ENCODE measurements at regions of chr12 and their contacts with region 1.

Region 1: GRCh38 chr12:108803428-108804105 is 53.8 kb downstream of the SSH1 start:
- DNase-seq: peak; percentile 88
- H3K4me3 Mint-ChIP-seq: no peak overlapping the region
- H3K27ac Mint-ChIP-seq: no peak overlapping the region
- H3K4me1 Mint-ChIP-seq: no peaks in the 10 kb centered on the region
- H3K27me3 Mint-ChIP-seq: no peaks in the 10 kb centered on the region
- CTCF ChIP-seq: peak; percentile 96

Region 2: GRCh38 chr12:108640802-108641445 is 162.6 kb before region 1 on chr12:
- CTCF ChIA-PET with region 1: interaction called, 17 read pairs
- POLR2A ChIA-PET with region 1: no interaction called
- intact Hi-C with region 1: no loop called
- DNase-seq: no peak
- H3K4me3 Mint-ChIP-seq: no peak overlapping the region
- H3K27ac Mint-ChIP-seq: no peak overlapping the region
- H3K4me1 Mint-ChIP-seq: peaks cover 23% of the 10 kb centered on the region
- H3K27me3 Mint-ChIP-seq: no peaks in the 10 kb centered on the region
- CTCF ChIP-seq: no peak

Region 3: GRCh38 chr12:108685469-108686260 is 117.9 kb before region 1 on chr12:
- CTCF ChIA-PET with region 1: interaction called, 19 read pairs
- POLR2A ChIA-PET with region 1: interaction called, 4 read pairs
- intact Hi-C with region 1: no loop called
- DNase-seq: no peak
- H3K4me3 Mint-ChIP-seq: no peak overlapping the region
- H3K27ac Mint-ChIP-seq: peak overlapping the region; percentile 70
- H3K4me1 Mint-ChIP-seq: peaks cover 48% of the 10 kb centered on the region
- H3K27me3 Mint-ChIP-seq: no peaks in the 10 kb centered on the region
- CTCF ChIP-seq: no peak

Region 4: DNA sequence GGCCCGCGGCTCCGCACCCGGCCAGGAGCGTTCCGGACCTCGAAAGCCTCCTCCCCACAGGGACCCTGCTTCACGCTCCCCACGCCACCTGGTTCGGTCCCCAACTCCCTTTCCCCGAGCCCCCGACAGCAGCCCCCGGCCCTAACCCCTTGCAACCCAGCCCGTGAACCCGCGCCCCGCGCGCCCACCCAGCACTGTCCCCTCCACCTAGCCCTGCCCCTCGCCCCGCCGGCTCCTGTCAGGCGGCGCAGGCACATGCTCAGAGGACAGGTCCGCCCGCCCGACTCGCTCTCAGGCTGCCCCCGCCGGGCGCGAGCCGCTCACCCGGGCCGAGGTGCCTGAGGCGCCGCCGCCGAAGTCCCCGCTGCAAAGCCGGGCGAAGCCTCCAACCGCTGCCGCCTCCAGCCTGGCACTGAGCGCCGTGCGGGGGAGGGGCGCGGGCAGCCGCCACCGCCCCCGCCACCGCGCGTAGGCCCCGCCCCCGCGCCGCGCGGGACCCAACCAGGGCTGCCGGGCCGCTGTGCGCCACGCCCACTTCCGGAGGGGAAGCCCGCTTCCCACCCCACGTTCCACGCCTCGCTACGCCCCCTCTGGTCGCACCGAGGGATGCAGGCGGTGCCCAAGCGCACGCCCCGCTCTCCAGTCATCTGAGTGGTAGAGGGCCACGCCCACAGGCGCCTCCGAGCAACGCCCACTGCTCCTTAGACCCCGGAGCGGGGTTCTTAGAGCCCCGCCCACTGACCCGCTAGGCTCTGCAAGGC is 72.3 kb before region 1 on chr12 and contains the start of gene CORO1C:
- CTCF ChIA-PET with region 1: interaction called, 8 read pairs
- POLR2A ChIA-PET with region 1: interaction called, 4 read pairs
- intact Hi-C with region 1: loop called (anchors 5 kb)
- DNase-seq: peak; percentile 96
- H3K4me3 Mint-ChIP-seq: peak within 1 kb of the TSS; percentile 90
- H3K27ac Mint-ChIP-seq: peak within 1 kb of the TSS; percentile 87
- H3K4me1 Mint-ChIP-seq: peaks cover 42% of the 10 kb centered on the region
- H3K27me3 Mint-ChIP-seq: no peaks in the 10 kb centered on the region
- CTCF ChIP-seq: peak; percentile 68
- total RNA-seq, gene CORO1C: 130 and 141 TPM in 2 replicates

Region 5: DNA sequence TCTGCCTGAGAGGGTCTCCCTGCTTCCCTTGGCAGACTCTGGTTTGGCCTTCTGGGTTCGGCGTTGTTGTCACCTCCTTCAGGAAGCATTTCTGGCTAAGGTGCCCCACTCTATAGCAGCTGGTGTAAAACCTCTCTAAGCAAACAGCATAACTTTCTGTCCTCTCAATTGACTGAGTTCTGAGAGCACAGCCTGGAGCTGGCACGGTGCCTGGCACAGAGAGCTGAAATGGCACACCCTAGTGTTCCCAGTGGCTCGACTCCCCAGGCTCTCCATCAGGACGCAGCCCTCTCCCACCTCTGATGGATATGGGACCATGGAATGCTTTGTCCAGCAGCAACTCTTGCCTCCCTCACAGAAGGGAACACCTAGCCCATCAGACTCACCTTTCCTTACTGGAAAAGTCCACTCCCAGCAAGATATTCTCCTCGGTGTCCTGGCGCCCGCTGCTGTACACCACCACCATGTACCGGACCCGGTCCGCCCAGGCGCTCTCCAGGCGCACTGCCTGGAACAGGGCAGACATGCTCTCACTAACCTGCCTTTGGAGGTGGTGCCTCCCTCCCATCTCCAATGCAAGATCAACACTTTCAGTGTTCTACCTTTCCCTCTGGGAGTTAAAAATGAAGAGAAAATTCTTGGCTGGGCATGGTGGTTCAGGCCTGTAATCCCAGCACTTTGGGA is 13.2 kb after region 1 on chr12:
- CTCF ChIA-PET with region 1: interaction called, 21 read pairs
- POLR2A ChIA-PET with region 1: interaction called, 7 read pairs
- intact Hi-C with region 1: no loop called
- DNase-seq: peak; percentile 33
- H3K4me3 Mint-ChIP-seq: no peak overlapping the region
- H3K27ac Mint-ChIP-seq: peak overlapping the region; percentile 12
- H3K4me1 Mint-ChIP-seq: peaks cover 31% of the 10 kb centered on the region
- H3K27me3 Mint-ChIP-seq: no peaks in the 10 kb centered on the region
- CTCF ChIP-seq: no peak